HAP-1 (cell line): ENCODE measurements at regions of chr3 and their contacts with region 1.

Region 1: DNA sequence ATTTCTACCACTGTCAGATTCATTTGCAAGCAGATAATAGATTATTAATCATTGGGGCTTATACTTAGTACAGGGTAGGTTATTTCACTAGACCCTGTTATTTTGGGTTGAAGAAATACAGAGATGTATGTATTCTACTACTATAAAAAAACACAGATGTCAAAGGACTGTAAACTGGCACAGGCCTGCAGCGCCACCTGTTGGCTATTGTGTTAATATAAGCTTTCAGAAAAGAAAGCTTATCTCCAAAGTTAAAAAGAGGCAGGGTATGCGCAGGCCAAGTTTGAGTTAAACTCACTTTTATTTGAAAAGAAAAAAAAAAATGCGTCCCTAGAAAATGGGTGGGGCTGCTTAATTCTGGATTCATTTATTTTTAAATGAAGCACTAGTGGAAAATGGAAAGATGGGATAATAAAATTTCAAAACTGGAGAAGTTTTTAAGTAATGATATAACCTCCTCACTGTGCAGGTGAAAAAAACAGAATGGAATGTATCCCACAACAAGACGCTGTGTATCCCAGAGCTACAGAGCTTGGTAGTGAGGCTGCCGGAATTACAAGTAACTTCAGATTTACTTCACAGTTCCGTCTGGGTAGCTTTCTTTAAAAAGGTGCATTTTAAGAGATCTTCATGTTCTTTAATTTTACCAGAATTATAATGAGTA is 407.2 kb upstream of the TGFBR2 start:
- DNase-seq: peak; percentile 68 to 86
- H3K4me3 ChIP-seq: no peak overlapping the region
- H3K4me1 ChIP-seq: peaks cover 2% of the 10 kb centered on the region; the same call in 1 of the 2 replicates
- H3K27me3 ChIP-seq: no peaks in the 10 kb centered on the region

Region 2: GRCh38 chr3:29759411-29760225 is 439.6 kb before region 1 on chr3:
- in situ Hi-C with region 1: no loop called
- DNase-seq: peak; percentile 39 to 58
- H3K4me3 ChIP-seq: no peak overlapping the region
- H3K4me1 ChIP-seq: peaks cover 17% of the 10 kb centered on the region
- H3K27me3 ChIP-seq: no peaks in the 10 kb centered on the region

Region 3: GRCh38 chr3:30035935-30036567 is 163.2 kb before region 1 on chr3:
- in situ Hi-C with region 1: loop called (anchors 10 kb)
- DNase-seq: no peak
- H3K4me3 ChIP-seq: no peak overlapping the region
- H3K4me1 ChIP-seq: no peaks in the 10 kb centered on the region
- H3K27me3 ChIP-seq: no peaks in the 10 kb centered on the region

Region 4: DNA sequence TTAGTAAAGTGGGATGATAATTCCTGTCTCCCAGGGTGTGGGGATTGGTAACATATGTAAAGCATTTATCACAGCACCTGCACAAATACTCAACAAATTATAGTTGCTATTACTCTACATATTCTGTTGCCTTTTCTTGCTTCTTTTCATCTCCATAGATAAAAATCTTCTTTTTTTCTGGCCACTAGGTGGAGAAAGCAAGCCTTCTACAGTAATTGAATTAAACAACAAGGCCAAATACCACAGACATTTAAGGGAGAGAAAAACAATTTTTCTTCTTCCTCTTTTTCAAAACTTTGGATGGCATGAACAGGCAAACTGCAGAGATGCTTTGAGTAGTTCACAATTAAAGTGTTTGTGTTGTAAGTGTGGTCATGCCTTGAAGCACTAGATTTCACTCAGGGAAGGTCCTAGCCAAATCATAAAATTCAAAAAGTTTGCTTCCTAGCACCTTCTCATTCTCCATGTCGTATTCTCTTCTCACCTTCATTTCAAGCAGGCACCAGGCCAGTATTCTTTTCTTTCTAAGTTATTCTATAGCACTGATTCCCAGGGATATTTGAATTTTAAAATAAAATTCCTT is 86.2 kb before region 1 on chr3:
- in situ Hi-C with region 1: loop called (anchors 10 kb)
- DNase-seq: peak in 1 of 2 experiments; percentile 73
- H3K4me3 ChIP-seq: no peak overlapping the region
- H3K4me1 ChIP-seq: no peaks in the 10 kb centered on the region
- H3K27me3 ChIP-seq: no peaks in the 10 kb centered on the region

Region 5: DNA sequence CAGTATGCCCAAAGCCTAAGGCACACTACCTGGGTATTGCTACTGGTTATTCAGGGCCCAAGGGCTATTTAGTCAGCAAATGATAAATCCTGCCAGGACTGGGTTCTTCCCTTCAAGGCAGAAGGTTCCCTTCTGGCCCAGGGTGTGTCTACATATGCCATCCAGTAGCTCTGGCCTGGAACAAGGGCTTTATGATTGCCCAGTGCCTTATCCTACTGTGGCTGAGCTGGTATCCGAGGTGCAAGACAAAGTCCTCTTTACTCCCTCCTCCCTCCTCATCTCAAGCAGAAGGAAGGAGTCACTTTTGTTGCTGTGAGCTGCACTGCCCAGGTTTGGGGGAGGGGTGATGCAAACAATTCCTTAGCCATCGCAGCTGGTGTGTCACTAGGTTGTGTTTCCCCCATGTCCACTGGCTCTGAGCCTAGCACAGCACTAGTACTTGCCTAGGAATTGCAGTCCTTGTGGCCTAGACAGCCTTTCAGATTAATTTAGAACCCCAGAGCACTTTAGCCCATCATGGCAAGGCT is 185.4 kb after region 1 on chr3:
- in situ Hi-C with region 1: no loop called
- DNase-seq: no peak
- H3K4me3 ChIP-seq: no peak overlapping the region
- H3K4me1 ChIP-seq: no peaks in the 10 kb centered on the region
- H3K27me3 ChIP-seq: no peaks in the 10 kb centered on the region

Region 6: GRCh38 chr3:30693470-30694120 is 494.4 kb after region 1 on chr3:
- in situ Hi-C with region 1: loop called (anchors 10 kb)
- DNase-seq: peak; percentile 63 to 69
- H3K4me3 ChIP-seq: no peak overlapping the region
- H3K4me1 ChIP-seq: no peaks in the 10 kb centered on the region
- H3K27me3 ChIP-seq: no peaks in the 10 kb centered on the region